Naive thymus-derived CD4-positive, alpha-beta T cell (primary cell): ENCODE measurements at regions of chr2 and their contacts with region 1.

Region 1: GRCh38 chr2:174248187-174248997 is at the start of gene OLA1:
- DNase-seq: peak; percentile 91 to 99 (median 95)
- ATAC-seq: peak; percentile 99
- H3K4me3 ChIP-seq: peak within 1 kb of the TSS; percentile 90
- H3K4me3 Mint-ChIP-seq: peak within 1 kb of the TSS; percentile 71 to 88 (median 86)
- H3K27ac ChIP-seq: peak within 1 kb of the TSS; percentile 82
- H3K27ac Mint-ChIP-seq: peak within 1 kb of the TSS; percentile 67 to 91 (median 79)
- H3K4me1 ChIP-seq: peaks cover 6 to 12% of the 10 kb centered on the region in 2 donors
- H3K4me1 Mint-ChIP-seq: peaks cover 18 to 32% (median 25%) of the 10 kb centered on the region in 7 donors
- H3K27me3 ChIP-seq: no peaks in the 10 kb centered on the region
- H3K27me3 Mint-ChIP-seq: peaks cover 0 to 5% (median 0%) of the 10 kb centered on the region in 5 donors
- total RNA-seq, gene OLA1: 34.4 to 84.7 (median 40.3) TPM

Region 2: DNA sequence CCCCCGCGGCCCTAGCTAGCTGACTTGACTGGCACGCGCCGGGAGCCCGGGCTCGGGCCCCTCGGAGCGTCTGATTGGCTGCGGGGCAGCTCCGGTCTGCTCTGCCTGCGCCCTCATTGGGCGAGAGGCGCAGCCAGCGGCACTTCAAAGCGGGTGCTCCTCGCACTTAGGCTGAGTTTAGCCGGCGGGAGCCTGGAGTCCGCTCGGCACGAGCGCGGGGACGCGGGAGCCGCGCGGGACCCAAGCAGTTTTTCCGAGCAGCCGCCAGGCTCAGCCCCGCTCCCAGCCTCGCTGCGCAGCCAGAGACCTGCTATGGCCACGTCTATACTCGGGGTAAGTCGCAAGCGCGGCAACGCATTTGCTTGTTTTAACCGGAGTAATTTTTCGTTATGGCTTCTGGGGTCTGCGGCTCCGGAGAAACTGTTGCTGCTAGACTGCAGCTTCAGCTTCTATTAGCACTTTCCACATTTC is 86.4 kb after region 1 on chr2 and contains the start of gene SP9:
- CTCF ChIA-PET with region 1: interaction called, 4 read pairs
- POLR2A ChIA-PET with region 1: no interaction called
- intact Hi-C with region 1: loop called (anchors 2 to 5 kb)
- DNase-seq: peak in 3 of 9 donors; percentile 30 to 42 (median 38)
- ATAC-seq: no peak
- H3K4me3 ChIP-seq: peak within 1 kb of the TSS; percentile 18
- H3K4me3 Mint-ChIP-seq: peak within 1 kb of the TSS; percentile 58 to 79 (median 66)
- H3K27ac ChIP-seq: no peak within 1 kb of the TSS
- H3K27ac Mint-ChIP-seq: peak within 1 kb of the TSS in 8 of 9 donors; percentile 20 to 88 (median 80)
- H3K4me1 ChIP-seq: peaks cover 28 to 34% of the 10 kb centered on the region in 2 donors
- H3K4me1 Mint-ChIP-seq: peaks cover 5 to 51% (median 36%) of the 10 kb centered on the region in 7 donors
- H3K27me3 ChIP-seq: peaks cover 69 to 83% of the 10 kb centered on the region in 2 donors
- H3K27me3 Mint-ChIP-seq: peaks cover 60 to 83% (median 78%) of the 10 kb centered on the region in 5 donors
- total RNA-seq, gene SP9: not detected